Vagina (tissue), 2 donors: ENCODE measurements at regions of chr2 and their contacts with region 1.

Region 1: GRCh38 chr2:20617892-20618467 is 32.9 kb downstream of the HS1BP3 start:
- DNase-seq: peak in 1 of 2 donors; percentile 99
- H3K4me3 ChIP-seq: peak overlapping the region in 1 of 2 donors; percentile 17
- H3K27ac ChIP-seq: peak overlapping the region; percentile 97
- H3K4me1 ChIP-seq: peaks cover 86% of the 10 kb centered on the region
- H3K27me3 ChIP-seq: no peaks in the 10 kb centered on the region
- CTCF ChIP-seq: peak in 1 of 3 experiments; percentile 74
- POLR2A ChIP-seq: no peak

Region 2: DNA sequence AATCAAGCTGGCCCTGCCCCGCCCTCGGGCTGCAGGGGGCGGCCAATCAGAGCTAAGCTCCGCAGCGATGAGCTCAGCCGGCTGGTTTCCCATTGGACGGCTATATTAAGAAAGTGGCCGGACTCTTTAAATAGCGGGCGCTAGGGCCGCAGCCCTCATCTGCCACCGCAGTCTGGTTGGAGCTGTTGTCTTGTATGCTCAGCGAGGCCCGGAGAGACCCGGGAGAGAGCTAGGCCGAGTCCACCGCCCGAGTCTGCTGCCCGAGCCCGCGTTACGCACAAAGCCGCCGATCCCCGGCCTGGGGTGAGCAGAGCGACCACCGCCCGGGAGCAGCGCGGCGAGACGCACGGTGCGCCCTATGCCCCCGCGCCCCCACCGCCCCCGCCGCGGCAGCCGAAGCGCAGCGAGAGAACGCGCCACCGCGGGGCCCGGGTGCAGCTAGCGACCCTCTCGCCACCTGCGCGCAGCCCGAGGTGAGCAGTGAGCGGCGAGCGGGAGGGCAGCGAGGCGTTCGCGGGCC is 171.0 kb before region 1 on chr2 and contains the start of gene RHOB:
- intact Hi-C with region 1: loop called (anchors 5 kb)
- DNase-seq: peak in 1 of 2 donors; percentile 99
- H3K4me3 ChIP-seq: peak within 1 kb of the TSS; percentile 91 to 96
- H3K27ac ChIP-seq: peak within 1 kb of the TSS; percentile 99
- H3K4me1 ChIP-seq: peaks cover 50% of the 10 kb centered on the region
- H3K27me3 ChIP-seq: no peaks in the 10 kb centered on the region
- CTCF ChIP-seq: peak in 1 of 3 experiments; percentile 22
- POLR2A ChIP-seq: peak; percentile 55 to 98
- total RNA-seq, gene RHOB: 1,771 TPM

Region 3: GRCh38 chr2:20490260-20491181 is 127.5 kb before region 1 on chr2:
- intact Hi-C with region 1: no loop called
- DNase-seq: peak in 1 of 2 donors; percentile 98
- H3K4me3 ChIP-seq: no peak overlapping the region
- H3K27ac ChIP-seq: peak overlapping the region; percentile 8
- H3K4me1 ChIP-seq: peaks cover 18% of the 10 kb centered on the region
- H3K27me3 ChIP-seq: no peaks in the 10 kb centered on the region
- CTCF ChIP-seq: no peak
- POLR2A ChIP-seq: no peak

Region 4: GRCh38 chr2:20600756-20601325 is 17.1 kb before region 1 on chr2:
- intact Hi-C with region 1: loop called (anchors 1 kb)
- DNase-seq: no peak
- H3K4me3 ChIP-seq: no peak overlapping the region
- H3K27ac ChIP-seq: no peak overlapping the region
- H3K4me1 ChIP-seq: peaks cover 66% of the 10 kb centered on the region
- H3K27me3 ChIP-seq: no peaks in the 10 kb centered on the region
- CTCF ChIP-seq: peak in 1 of 3 experiments; percentile 19
- POLR2A ChIP-seq: no peak

Region 5: DNA sequence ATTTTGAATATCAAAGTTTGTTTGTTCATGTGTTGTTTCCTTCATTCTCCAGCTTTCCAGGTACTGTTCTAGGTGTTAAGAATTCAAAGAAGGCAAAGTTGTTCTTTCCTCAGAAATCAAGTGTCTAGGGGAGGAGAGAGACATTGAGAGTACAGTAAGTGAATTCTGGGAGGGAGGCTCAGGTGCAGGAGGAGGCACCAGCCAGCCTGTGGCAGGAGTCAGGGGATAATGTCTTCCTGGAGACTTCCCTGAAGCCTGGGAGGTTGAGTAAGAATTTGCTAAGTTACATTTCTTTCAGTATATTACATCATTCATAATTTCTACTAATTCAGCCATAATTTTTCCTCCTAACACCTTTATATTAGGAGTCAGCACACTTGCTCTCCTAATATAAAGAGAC is 967.9 kb after region 1 on chr2:
- intact Hi-C with region 1: no loop called
- DNase-seq: no peak
- H3K4me3 ChIP-seq: no peak overlapping the region
- H3K27ac ChIP-seq: no peak overlapping the region
- H3K4me1 ChIP-seq: no peaks in the 10 kb centered on the region
- H3K27me3 ChIP-seq: no peaks in the 10 kb centered on the region
- CTCF ChIP-seq: no peak
- POLR2A ChIP-seq: no peak